WTC11 (cell line): ENCODE measurements at regions of chr1 and their contacts with region 1.

Region 1: DNA sequence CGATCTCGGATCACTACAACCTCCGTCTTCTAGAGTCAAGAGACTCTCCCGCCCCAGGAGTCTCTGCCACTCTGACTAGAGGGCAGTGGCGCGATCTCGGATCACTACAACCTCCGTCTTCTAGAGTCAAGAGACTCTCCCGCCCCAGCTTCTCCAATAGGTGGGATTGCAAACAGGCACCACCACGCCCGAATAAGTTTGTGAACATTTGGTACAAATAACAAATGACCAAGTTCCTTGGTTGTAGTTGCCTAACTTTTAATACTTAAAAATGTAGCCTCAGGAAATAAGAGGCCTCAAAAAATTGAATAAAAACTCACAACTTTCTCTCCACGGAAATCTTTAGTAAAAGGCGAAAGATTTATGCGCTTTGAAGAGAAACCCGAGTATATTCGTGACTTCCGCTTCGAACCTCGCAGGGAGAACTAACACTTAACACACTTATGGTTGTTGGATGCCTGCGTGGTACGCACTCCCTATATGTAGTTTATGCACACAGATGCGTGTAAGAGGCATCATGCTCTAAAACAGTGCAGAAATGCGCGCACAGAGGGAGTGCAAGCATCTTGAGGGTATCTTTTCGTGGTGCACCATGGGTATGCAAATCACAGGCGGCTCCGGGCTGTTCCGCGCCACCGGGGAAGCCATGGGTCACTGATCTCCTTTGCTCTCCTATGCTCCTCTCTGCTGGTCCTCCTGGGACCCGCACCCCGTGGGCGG is 11.4 kb downstream of the BTBD19 start:
- DNase-seq: peak; percentile 83
- ATAC-seq: peak; percentile 93
- H3K4me3 Mint-ChIP-seq: peak overlapping the region; percentile 81
- H3K27ac Mint-ChIP-seq: peak overlapping the region; percentile 100
- H3K4me1 Mint-ChIP-seq: peaks cover 24% of the 10 kb centered on the region
- H3K27me3 Mint-ChIP-seq: no peaks in the 10 kb centered on the region
- CTCF ChIP-seq: no peak

Region 2: GRCh38 chr1:44721485-44722361 is 98.0 kb before region 1 on chr1:
- CTCF ChIA-PET with region 1: no interaction called
- POLR2A ChIA-PET with region 1: interaction called, 20 read pairs
- DNase-seq: no peak
- ATAC-seq: peak; percentile 90
- H3K4me3 Mint-ChIP-seq: no peak overlapping the region
- H3K27ac Mint-ChIP-seq: peak overlapping the region; percentile 94
- H3K4me1 Mint-ChIP-seq: peaks cover 6% of the 10 kb centered on the region; the same call in 1 of the 2 replicates
- H3K27me3 Mint-ChIP-seq: peaks cover 3% of the 10 kb centered on the region
- CTCF ChIP-seq: no peak

Region 3: DNA sequence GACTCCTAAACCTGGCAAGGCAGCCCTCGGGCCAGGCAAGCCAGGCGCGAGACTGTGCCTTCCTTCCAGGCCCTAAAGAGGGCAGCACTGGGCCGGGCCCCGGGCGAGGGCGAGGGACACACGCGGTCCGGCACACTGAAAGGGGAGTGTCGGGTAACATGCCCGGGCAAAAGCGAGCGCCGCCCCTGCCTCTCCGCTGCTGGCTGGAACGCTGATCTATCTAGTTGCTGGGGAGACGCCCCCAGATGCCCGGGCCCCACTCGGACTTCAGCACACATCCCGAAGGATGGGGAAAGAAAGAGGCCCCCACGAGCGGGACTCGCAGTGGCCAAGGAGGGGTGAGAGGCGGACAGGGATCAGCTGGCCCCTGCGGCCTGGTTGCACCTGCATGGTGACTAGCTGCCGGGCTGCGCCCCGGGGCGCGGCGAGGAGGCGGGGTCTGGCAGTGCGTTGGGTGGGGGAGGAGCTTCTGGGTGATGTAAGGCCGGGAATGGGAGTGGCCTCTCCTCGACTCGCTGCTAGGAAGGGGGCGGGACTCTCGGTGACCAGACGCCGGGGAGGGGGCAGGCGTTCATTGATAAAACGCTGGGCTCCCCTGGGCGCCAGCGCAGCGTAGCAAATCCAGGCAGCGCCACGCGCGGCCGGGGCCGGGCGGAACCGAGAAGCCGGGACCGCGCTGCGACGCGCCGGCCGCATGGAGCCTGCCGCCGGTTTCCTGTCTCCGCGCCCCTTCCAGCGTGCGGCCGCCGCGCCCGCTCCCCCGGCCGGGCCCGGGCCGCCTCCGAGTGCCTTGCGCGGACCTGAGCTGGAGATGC is 19.8 kb before region 1 on chr1 and contains the start of gene PLK3:
- CTCF ChIA-PET with region 1: interaction called, 35 read pairs
- POLR2A ChIA-PET with region 1: interaction called, 22 read pairs
- DNase-seq: peak; percentile 98
- ATAC-seq: peak; percentile 90
- H3K4me3 Mint-ChIP-seq: peak within 1 kb of the TSS; percentile 87
- H3K27ac Mint-ChIP-seq: peak within 1 kb of the TSS; percentile 99
- H3K4me1 Mint-ChIP-seq: peaks cover 18% of the 10 kb centered on the region
- H3K27me3 Mint-ChIP-seq: peaks cover 3% of the 10 kb centered on the region; the same call in 1 of the 2 replicates
- CTCF ChIP-seq: peak; percentile 66
- total RNA-seq, gene PLK3: 10.1 to 16.4 TPM (median 12.0 TPM) in 3 replicates

Region 4: GRCh38 chr1:44855742-44856141 is 36.0 kb after region 1 on chr1:
- CTCF ChIA-PET with region 1: no interaction called
- POLR2A ChIA-PET with region 1: no interaction called
- DNase-seq: no peak
- ATAC-seq: no peak
- H3K4me3 Mint-ChIP-seq: no peak overlapping the region
- H3K27ac Mint-ChIP-seq: no peak overlapping the region
- H3K4me1 Mint-ChIP-seq: peaks cover 5% of the 10 kb centered on the region
- H3K27me3 Mint-ChIP-seq: no peaks in the 10 kb centered on the region
- CTCF ChIP-seq: no peak

Region 5: DNA sequence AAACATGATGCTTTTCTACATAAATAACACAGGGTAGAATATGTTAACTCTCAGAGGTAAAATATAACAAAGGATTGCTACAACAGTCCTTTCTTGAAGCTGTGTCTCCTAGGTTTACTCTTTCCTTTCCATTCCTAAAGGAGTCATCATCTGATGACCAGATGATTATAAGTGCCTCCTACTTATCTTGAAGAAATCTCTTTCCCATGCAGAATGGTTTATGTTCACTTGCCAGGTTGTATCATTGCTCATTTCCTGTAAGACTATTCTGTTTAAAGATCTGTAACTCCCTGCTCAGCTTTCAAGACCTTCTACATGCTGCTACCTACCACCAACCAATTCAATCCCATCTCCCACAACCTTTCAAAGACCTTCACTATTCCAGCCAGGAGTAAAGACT is 74.8 kb after region 1 on chr1:
- CTCF ChIA-PET with region 1: no interaction called
- POLR2A ChIA-PET with region 1: no interaction called
- DNase-seq: no peak
- ATAC-seq: no peak
- H3K4me3 Mint-ChIP-seq: no peak overlapping the region
- H3K27ac Mint-ChIP-seq: no peak overlapping the region
- H3K4me1 Mint-ChIP-seq: no peaks in the 10 kb centered on the region
- H3K27me3 Mint-ChIP-seq: no peaks in the 10 kb centered on the region; the same call in 1 of the 2 replicates
- CTCF ChIP-seq: no peak